Upper lobe of right lung (tissue), 1 donor: ENCODE measurements at regions of chr13 and their contacts with region 1.

Region 1: GRCh38 chr13:31431722-31432137 is 232.0 kb downstream of the B3GLCT start:
- DNase-seq: no peak
- ATAC-seq: peak; percentile 87
- H3K4me3 ChIP-seq: no peak overlapping the region
- H3K27ac ChIP-seq: no peak overlapping the region
- H3K4me1 ChIP-seq: no peaks in the 10 kb centered on the region
- H3K27me3 ChIP-seq: no peaks in the 10 kb centered on the region
- CTCF ChIP-seq: peak; percentile 89

Region 2: GRCh38 chr13:31610270-31610998 is 178.7 kb after region 1 on chr13:
- intact Hi-C with region 1: no loop called
- DNase-seq: no peak
- ATAC-seq: no peak
- H3K4me3 ChIP-seq: no peak overlapping the region
- H3K27ac ChIP-seq: no peak overlapping the region
- H3K4me1 ChIP-seq: no peaks in the 10 kb centered on the region
- H3K27me3 ChIP-seq: no peaks in the 10 kb centered on the region
- CTCF ChIP-seq: no peak

Region 3: GRCh38 chr13:31733066-31733465 is 301.3 kb after region 1 on chr13:
- intact Hi-C with region 1: loop called (anchors 10 kb)
- DNase-seq: no peak
- ATAC-seq: no peak
- H3K4me3 ChIP-seq: peak overlapping the region; percentile 28
- H3K27ac ChIP-seq: no peak overlapping the region
- H3K4me1 ChIP-seq: peaks cover 4% of the 10 kb centered on the region
- H3K27me3 ChIP-seq: no peaks in the 10 kb centered on the region
- CTCF ChIP-seq: no peak